ENCODE measurements at regions of chr3 and their contacts with region 1.

Region 1: DNA sequence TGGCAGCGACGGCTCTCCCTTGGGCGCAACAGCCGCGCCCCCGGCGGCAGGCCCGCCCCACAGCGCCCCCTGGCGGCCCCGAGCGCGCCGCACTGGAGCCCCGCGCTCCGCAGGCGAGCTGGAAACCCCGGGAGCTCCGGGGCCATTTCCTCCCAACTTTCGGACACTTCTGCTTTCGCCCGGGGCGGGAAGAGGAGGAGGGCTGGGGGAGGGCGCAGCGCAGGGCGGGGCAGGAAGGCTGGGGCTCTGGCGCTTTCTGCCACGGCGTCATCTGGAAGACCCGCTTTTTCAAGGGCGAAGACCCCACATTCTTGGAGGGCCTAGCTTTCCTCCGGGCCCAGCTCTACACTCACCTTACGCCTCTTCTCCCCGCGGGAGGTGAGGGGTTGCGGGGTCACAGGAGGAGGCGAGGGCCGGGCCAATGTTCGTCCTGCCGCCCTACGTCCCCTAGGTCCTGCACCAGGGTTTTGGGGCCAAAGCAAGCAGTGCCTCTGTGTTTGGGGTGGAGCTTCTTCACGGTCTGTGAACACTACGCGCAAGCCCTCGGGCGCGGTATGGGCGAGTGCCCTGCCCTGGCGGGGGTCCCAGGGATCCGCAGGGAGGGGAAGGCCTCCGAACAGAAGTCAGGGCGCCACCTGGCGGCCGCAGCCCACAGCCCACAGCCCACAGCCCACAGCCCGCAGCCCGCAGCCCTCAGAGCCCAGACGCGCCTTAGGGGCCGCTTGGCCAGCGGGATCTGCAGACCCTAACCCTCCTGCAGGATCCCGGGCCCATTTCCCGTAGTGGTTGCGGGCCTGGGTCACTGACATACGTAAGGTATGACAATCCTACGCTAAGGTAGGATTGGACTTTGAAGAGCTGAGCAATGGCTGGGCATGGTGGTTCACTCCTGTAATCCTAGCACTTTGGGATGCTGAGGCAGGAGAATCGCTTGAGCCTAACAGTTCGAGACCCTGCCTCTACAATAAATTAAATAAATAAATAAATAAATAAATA is 31.1 kb downstream of the FOXL2 start:
- DNase-seq: peak; percentile 97
- ATAC-seq: peak; percentile 97

Region 2: DNA sequence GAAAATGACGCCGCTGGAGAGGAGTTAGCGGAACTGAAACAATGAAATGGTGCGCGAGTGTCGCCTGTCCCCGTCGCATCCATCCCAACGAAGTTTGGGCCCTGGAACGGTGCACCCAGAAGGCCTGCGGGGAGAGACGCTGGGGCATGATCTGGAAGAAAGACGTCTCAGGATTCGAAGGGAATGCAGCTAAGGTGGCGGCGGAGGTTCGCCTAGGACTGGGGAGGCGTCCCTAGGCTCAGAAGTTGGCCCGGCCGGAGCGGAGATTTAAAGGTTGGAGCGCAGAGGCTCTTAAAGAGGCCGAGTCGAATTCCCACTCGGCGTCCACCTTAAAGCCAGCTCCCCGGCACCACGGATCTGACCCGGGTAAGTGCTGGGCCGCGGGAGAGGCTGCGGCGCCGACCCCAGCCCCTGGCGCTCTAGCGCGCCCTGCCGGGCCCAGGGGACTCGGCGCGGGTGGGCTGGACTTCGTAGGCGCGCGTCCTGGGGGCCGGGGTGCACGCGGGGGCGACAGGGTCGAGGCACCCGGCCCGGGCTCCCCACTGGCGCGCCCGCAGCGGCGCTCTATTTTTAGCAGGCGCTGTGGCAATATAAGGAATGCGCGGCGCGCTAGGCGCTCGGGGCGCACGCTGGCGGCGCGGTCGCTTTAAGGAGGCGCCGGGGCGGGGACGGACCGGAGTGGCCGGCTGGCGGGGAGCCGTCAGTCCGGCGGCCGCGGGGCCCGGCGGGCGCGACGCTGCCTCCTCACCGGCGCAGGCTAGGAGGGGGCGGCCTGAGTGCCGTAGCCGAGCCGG is 567.6 kb before region 1 on chr3 and contains the start of gene MRAS:
- intact Hi-C with region 1: loop called (anchors 10 kb)
- DNase-seq: peak; percentile 88
- ATAC-seq: peak; percentile 85
- total RNA-seq, gene MRAS: 396 TPM

Region 3: GRCh38 chr3:138479438-138479863 is 436.4 kb before region 1 on chr3:
- intact Hi-C with region 1: loop called (anchors 10 kb)
- DNase-seq: no peak
- ATAC-seq: peak; percentile 26

Region 4: GRCh38 chr3:138594150-138594934 is 321.5 kb before region 1 on chr3 and contains the start of gene CEP70:
- intact Hi-C with region 1: loop called (anchors 1 kb)
- DNase-seq: peak; percentile 96
- ATAC-seq: peak; percentile 99
- total RNA-seq, gene CEP70: 21.6 TPM

Region 5: DNA sequence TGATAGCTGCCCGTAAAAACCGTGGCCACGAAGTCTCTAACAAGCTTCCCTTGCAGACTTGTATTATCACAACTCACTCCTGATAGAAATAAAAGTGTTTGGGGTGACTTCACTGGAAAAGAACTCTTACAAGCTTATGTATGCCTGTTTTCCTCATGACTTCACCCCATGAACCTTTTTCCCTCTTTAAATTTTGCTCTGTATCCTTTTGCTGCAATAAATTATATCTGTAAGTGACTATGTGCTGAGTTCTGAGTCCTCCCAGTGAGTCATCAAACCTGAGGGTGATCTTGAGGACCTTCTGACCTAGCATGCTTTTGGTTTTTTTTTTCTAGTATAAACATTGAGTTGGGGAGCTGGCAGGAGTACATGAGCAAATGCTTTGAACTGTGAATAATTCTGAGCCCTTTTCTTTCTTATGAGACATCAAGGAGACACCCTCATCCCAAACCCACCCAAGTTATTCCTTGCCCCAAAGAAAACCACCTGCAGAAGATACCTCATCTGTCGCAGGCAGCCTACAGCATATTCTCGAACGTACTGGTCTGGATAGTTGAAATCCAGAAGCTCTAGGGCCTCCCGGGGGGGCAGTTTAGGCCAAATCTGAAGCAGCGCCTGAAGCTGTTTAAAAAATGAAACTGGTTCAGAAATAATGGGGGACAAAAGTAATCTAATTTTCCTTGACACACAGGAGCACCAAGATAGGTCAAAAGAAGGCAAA is 221.4 kb before region 1 on chr3:
- intact Hi-C with region 1: loop called (anchors 1 kb)
- DNase-seq: no peak
- ATAC-seq: no peak

Region 6: GRCh38 chr3:138834359-138835212 is 81.2 kb before region 1 on chr3 and contains the start of gene PIK3CB:
- intact Hi-C with region 1: loop called (anchors 2 kb)
- DNase-seq: peak; percentile 96
- ATAC-seq: peak; percentile 99
- total RNA-seq, gene PIK3CB: 30.9 TPM

Region 7: GRCh38 chr3:139032326-139033002 is 116.7 kb after region 1 on chr3:
- intact Hi-C with region 1: no loop called
- DNase-seq: no peak
- ATAC-seq: no peak